ENCODE measurements at regions of chr11 and their contacts with region 1.

Region 1: GRCh38 chr11:62671575-62672389 is at the starts of genes LBHD1 and UQCC3:
- DNase-seq: peak; percentile 85
- H3K4me3 Mint-ChIP-seq: peak within 1 kb of the TSS; percentile 95
- H3K27ac Mint-ChIP-seq: peak within 1 kb of the TSS; percentile 95
- H3K4me1 Mint-ChIP-seq: peaks cover 6% of the 10 kb centered on the region
- H3K27me3 Mint-ChIP-seq: no peaks in the 10 kb centered on the region
- CTCF ChIP-seq: no peak
- total RNA-seq, gene LBHD1: 8.3 and 8.7 TPM in 2 replicates
- total RNA-seq, gene UQCC3: 11.6 and 13.8 TPM in 2 replicates

Region 2: GRCh38 chr11:62444236-62444833 is 227.4 kb before region 1 on chr11:
- CTCF ChIA-PET with region 1: no interaction called
- POLR2A ChIA-PET with region 1: no interaction called
- intact Hi-C with region 1: no loop called
- DNase-seq: no peak
- H3K4me3 Mint-ChIP-seq: no peak overlapping the region
- H3K27ac Mint-ChIP-seq: no peak overlapping the region
- H3K4me1 Mint-ChIP-seq: peaks cover 3% of the 10 kb centered on the region
- H3K27me3 Mint-ChIP-seq: peaks cover 19% of the 10 kb centered on the region
- CTCF ChIP-seq: no peak

Region 3: DNA sequence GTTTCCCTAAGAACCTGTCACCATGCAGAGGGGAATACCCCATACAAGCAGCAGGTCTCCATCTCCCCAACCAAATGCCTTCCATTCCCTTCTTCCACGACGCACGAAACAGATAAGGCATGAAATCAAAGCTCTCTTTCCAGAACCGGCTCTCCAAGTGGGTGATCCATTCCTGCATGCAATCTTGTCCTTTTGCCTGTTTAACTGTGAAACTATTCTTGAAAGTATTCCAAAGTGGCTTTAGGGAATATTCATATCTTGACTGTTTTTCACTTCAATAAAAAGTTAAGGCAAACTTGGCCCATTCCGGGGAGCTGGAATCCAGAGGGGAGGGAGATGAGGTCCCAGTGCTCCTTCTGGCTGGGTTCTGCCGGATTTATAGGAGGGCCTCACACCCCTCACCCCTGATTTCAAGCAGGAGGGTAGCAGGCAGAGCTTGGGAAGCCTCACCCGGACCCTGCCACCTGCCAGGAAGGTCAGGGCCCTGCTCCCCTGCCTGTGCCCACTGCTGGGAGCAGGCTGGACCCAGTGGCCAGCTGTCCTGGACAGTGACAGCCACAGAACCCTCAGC is 192.1 kb before region 1 on chr11:
- CTCF ChIA-PET with region 1: no interaction called
- POLR2A ChIA-PET with region 1: no interaction called
- intact Hi-C with region 1: no loop called
- DNase-seq: no peak
- H3K4me3 Mint-ChIP-seq: no peak overlapping the region
- H3K27ac Mint-ChIP-seq: no peak overlapping the region
- H3K4me1 Mint-ChIP-seq: no peaks in the 10 kb centered on the region
- H3K27me3 Mint-ChIP-seq: no peaks in the 10 kb centered on the region
- CTCF ChIP-seq: no peak

Region 4: DNA sequence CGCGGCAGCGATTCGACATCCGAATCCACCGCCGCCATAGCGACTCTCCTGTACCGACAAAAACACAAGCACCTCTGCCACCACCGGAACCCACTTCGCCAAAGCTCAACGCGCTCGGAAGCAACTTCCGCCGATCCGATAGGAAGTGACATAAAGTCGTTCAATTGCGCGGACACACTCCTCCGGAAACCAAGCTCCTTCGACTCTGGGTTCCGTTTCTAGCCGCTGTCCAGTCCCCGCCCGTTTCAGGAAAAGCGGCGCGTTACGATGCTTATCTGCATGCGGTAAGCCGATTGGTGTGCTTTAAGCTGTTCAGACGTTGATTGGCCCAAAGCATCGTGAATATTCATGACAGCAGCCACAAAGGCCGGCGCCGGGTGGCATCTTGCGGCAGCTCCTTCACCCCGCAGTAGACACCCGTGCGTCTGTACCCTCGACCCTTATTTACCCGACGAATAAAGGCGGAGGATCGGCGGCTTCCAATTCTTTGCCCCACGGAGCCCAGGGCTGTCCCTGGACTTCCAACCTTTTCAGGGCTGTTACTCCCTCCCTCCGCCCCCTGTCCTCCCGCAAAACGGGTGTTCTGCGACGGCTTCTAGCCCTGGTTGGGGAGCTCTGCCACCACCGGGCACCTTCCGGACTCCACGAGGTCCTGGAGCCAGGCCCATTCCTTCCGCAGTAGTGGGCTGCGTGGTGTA is 80.2 kb before region 1 on chr11 and contains the start of gene TUT1:
- CTCF ChIA-PET with region 1: interaction called, 5 read pairs
- POLR2A ChIA-PET with region 1: interaction called, 58 read pairs
- intact Hi-C with region 1: loop called (anchors 5 kb)
- DNase-seq: peak; percentile 99
- H3K4me3 Mint-ChIP-seq: peak within 1 kb of the TSS; percentile 96
- H3K27ac Mint-ChIP-seq: peak within 1 kb of the TSS; percentile 95
- H3K4me1 Mint-ChIP-seq: peaks cover 12% of the 10 kb centered on the region
- H3K27me3 Mint-ChIP-seq: no peaks in the 10 kb centered on the region
- CTCF ChIP-seq: no peak
- total RNA-seq, gene TUT1: 26.0 and 28.3 TPM in 2 replicates

Region 5: GRCh38 chr11:62621567-62622470 is 50.0 kb before region 1 on chr11 and contains the start of gene B3GAT3:
- CTCF ChIA-PET with region 1: interaction called, 3 read pairs
- POLR2A ChIA-PET with region 1: interaction called, 86 read pairs
- intact Hi-C with region 1: no loop called
- DNase-seq: peak; percentile 98
- H3K4me3 Mint-ChIP-seq: peak within 1 kb of the TSS; percentile 97
- H3K27ac Mint-ChIP-seq: peak within 1 kb of the TSS; percentile 92
- H3K4me1 Mint-ChIP-seq: peaks cover 12% of the 10 kb centered on the region
- H3K27me3 Mint-ChIP-seq: no peaks in the 10 kb centered on the region
- CTCF ChIP-seq: no peak
- total RNA-seq, gene B3GAT3: 40.1 and 42.4 TPM in 2 replicates

Region 6: DNA sequence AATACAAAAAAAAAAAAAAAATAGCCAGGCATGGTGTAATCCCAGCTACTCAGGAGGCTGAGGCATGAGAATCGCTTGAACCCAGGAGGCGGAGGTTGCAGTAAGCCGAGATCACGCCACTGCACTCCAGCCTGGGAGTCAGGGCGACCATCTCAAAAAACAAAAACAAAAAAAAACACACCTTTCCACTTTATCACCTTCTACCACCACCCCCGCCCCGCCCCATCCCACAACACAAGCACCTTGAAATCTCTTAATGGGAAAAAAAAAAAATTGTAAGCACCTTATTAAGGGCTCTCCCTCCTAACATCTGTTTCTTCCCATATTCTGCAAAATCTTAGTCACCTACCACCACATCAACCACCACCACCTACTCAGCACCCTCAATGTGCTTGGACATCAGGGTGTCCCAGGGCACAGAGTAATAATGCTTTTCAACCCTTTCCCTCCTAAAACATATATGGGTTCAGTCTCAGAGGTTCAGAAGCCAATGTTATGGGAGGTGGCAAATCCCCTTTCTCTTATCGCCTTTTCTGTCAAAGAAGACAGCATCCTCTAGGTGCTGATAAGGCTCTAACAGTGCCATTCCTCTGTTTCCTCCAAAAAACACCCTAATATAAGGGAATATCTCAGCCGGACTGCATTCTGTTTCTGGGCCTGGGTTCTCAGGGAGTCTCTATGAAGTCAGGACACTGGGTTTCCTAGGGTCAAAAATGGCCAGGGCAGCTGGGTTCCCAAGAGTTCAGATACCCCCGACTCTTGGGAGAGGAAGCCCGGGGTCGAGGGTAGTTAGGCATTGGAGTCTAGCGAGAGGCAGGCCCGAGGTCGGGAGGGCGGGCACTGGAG is 19.4 kb before region 1 on chr11:
- CTCF ChIA-PET with region 1: interaction called, 3 read pairs
- POLR2A ChIA-PET with region 1: interaction called, 222 read pairs
- intact Hi-C with region 1: no loop called
- DNase-seq: no peak
- H3K4me3 Mint-ChIP-seq: peak overlapping the region; percentile 93
- H3K27ac Mint-ChIP-seq: peak overlapping the region; percentile 96
- H3K4me1 Mint-ChIP-seq: peaks cover 14% of the 10 kb centered on the region
- H3K27me3 Mint-ChIP-seq: no peaks in the 10 kb centered on the region
- CTCF ChIP-seq: no peak

Region 7: DNA sequence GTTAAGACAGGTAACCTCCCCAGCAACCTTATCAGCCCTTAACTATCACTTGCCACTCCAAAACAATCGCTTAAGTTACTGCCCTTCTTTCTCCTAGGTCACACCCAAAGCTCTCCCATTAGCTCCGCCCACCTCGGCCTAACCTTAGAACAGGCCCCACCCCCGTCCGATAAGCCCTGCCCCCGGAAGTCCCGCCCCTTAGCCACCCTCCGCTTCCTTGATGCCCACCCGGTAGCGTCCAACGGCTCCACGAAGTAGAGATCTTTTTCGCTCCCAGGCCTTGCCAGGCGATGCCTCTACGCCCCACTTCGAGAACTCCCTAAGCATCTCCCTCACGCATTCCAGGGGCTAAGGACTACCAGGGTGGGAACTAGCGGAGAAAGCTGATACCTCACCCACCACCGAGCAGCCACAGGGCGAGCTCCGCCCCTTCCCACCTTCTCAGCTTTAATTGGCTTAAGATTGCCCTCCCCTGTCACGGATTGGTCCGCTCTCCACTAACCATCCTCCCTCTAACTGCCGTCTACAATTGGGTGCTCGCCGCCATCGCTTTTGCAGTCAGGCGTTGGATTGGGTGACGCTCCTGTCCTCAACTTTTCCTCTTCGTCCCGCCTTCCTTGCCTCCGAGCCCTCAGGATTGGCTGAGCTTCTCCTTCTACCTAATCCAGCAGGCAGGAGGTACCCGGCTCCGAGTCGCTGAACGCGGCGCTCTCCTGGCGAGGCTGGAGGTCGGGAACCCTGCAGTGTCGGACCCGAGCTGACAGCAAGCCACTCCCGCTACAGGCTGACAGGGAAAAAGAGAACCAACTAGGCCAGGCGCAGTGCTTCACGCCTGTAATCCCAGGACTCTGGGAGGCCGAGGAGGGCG is 82.2 kb after region 1 on chr11 and contains the start of gene ZBTB3:
- CTCF ChIA-PET with region 1: interaction called, 5 read pairs
- POLR2A ChIA-PET with region 1: interaction called, 13 read pairs
- intact Hi-C with region 1: no loop called
- DNase-seq: peak; percentile 100
- H3K4me3 Mint-ChIP-seq: peak within 1 kb of the TSS; percentile 98
- H3K27ac Mint-ChIP-seq: peak within 1 kb of the TSS; percentile 96
- H3K4me1 Mint-ChIP-seq: peaks cover 3% of the 10 kb centered on the region
- H3K27me3 Mint-ChIP-seq: no peaks in the 10 kb centered on the region
- CTCF ChIP-seq: no peak
- total RNA-seq, gene ZBTB3: 7.1 and 11.6 TPM in 2 replicates

Region 8: GRCh38 chr11:62787005-62787759 is 115.4 kb after region 1 on chr11 and contains the start of gene TMEM179B:
- CTCF ChIA-PET with region 1: interaction called, 3 read pairs
- POLR2A ChIA-PET with region 1: interaction called, 26 read pairs
- intact Hi-C with region 1: no loop called
- DNase-seq: peak; percentile 98
- H3K4me3 Mint-ChIP-seq: peak within 1 kb of the TSS; percentile 90
- H3K27ac Mint-ChIP-seq: peak within 1 kb of the TSS; percentile 93
- H3K4me1 Mint-ChIP-seq: peaks cover 15% of the 10 kb centered on the region
- H3K27me3 Mint-ChIP-seq: no peaks in the 10 kb centered on the region
- CTCF ChIP-seq: peak; percentile 40
- total RNA-seq, gene TMEM179B: 45.1 and 47.8 TPM in 2 replicates

Region 9: GRCh38 chr11:62855571-62856332 is 184.0 kb after region 1 on chr11:
- CTCF ChIA-PET with region 1: interaction called, 3 read pairs
- POLR2A ChIA-PET with region 1: interaction called, 18 read pairs
- intact Hi-C with region 1: no loop called
- DNase-seq: peak; percentile 98
- H3K4me3 Mint-ChIP-seq: peak overlapping the region; percentile 94
- H3K27ac Mint-ChIP-seq: peak overlapping the region; percentile 64
- H3K4me1 Mint-ChIP-seq: peaks cover 35% of the 10 kb centered on the region
- H3K27me3 Mint-ChIP-seq: no peaks in the 10 kb centered on the region
- CTCF ChIP-seq: no peak